Caco-2 (cell line): ENCODE measurements at regions of chr21 and their contacts with region 1.

Region 1: DNA sequence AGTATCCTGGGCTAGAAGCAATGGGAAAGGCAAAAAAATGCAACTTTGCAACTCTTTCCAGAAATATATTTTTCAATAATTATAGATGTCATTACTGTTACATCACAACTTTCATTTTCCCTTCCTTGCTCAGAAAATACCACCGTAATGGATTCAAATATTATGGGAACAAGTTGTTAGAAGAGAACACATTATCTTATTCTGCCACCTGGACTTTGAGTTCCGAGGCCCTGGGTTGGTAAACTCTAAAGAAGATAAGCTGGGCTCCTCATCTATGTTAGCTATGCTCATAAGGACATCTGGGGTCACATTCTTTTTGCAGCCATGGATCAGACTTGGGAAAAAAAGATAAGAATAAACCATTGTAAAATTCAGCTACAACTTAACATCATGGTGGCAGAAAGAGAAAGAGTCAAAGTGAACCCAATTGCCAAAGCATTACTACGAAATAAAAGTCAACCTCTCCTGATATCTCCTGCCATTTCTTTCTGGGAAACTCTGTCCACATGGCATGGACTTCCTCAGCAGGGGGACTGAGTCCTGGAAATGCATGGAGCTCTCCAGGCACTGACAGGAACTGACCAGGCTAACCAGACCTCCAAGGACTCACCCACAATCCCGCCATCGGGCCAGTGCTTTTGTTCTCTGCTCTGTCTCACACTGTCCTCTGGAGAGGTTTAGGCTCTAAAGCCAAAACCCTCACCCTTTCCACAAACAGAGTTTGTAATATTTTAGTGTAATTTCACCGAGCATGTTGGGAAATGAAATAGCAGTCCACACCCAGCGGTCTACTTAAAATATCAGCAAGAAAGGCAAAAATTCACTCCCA is 499.1 kb upstream of the RUNX1 start:
- DNase-seq: peak; percentile 53 to 70
- H3K4me3 ChIP-seq: no peak overlapping the region
- H3K4me3 Mint-ChIP-seq: peak overlapping the region; percentile 15
- H3K27ac Mint-ChIP-seq: peak overlapping the region; percentile 82
- H3K4me1 ChIP-seq: peaks cover 36% of the 10 kb centered on the region
- H3K4me1 Mint-ChIP-seq: peaks cover 21% of the 10 kb centered on the region
- H3K27me3 ChIP-seq: no peaks in the 10 kb centered on the region
- H3K27me3 Mint-ChIP-seq: no peaks in the 10 kb centered on the region
- CTCF ChIP-seq: no peak

Region 2: DNA sequence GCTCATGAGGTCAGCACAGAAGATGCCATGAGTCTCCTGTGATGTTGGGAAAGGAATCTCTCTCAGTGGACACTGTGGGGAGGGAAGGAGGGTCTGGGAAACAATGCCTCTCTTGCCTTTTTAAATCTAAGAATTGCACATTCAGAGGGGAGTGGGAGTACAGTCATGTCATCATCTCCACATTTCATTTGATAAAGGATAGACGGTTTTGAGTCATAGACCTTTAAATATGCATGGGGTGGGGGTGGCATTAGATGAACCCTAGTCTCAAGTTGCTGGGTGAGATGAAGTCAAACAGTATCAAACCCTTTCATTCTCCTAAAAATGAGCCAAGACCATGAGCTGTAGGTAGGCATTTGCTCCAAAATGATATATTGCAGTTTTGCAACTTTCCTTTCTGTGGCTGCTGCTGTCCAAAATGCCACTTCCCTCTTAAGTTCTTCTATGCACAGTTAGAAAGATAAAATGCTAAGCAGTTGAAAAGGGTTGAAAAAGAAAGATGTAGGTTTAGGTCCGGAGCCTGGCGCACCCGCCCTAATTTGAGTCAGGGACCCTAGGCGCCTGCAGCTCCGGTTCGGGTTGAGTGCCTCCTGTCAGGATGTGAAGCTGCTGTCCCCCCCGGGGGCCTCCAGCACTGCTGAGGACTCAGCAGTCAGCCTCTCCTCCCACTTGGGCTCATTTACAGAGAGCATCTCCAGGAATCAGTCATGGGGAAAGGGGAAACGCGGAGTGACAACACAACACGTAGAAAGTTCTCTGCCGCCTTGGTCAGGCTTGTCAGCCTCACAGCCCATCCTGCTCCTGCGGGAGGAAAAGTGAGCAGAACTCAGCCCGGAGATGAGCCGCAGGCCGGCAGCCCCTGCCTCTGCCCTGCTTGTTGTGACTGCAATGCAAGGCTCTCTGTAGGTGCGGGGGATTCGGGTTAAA is 19.8 kb before region 1 on chr21:
- CTCF ChIA-PET with region 1: no interaction called
- POLR2A ChIA-PET with region 1: no interaction called
- intact Hi-C with region 1: loop called (anchors 1 kb)
- DNase-seq: no peak
- H3K4me3 ChIP-seq: no peak overlapping the region
- H3K4me3 Mint-ChIP-seq: no peak overlapping the region
- H3K27ac Mint-ChIP-seq: peak overlapping the region; percentile 48
- H3K4me1 ChIP-seq: peaks cover 32% of the 10 kb centered on the region
- H3K4me1 Mint-ChIP-seq: no peaks in the 10 kb centered on the region
- H3K27me3 ChIP-seq: no peaks in the 10 kb centered on the region
- H3K27me3 Mint-ChIP-seq: no peaks in the 10 kb centered on the region
- CTCF ChIP-seq: no peak